ENCODE measurements at regions of chr4 and their contacts with region 1.

Region 1: GRCh38 chr4:151362404-151363164 is 37.2 kb upstream of the SH3D19 start:
- DNase-seq: peak; percentile 68 to 86 (median 80)
- H3K4me3 ChIP-seq: no peak overlapping the region
- H3K27ac ChIP-seq: peak overlapping the region in 16 of 59 donors; percentile 1 to 67 (median 26)
- H3K27me3 ChIP-seq: no peaks in the 10 kb centered on the region
- CTCF ChIP-seq: peak; percentile 91 to 100 (median 97)

Region 2: DNA sequence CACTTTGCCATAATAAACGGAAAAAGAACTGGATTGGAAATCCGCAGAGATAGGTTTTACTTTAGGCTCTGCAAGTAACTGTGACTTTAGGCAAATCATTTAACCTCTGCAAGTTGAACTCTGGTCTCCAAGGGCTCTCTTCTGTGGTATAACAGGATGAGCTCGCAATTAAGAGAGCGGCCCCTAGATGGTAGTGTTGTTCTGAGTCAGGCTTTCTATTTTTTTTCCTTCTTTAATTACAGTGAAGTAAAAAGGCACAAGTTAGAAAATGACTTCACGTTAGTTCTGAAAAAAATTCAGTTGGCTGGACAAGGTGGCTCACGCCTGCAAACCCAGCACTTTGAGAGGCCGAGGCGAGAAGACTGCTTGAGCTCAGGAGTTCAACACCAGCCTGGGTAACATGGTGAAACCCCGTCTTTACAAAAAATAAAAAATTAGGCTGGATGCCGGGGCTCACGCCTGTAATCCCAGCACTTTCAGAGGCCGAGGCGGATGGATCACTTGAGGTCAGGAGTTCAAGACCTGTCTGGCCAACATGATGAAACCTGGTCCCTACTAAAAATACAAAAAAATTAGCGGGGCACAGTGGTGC is 245.1 kb before region 1 on chr4:
- intact Hi-C with region 1: loop called (anchors 5 kb)
- DNase-seq: peak in 7 of 10 donors; percentile 31 to 69 (median 46)
- H3K4me3 ChIP-seq: no peak overlapping the region
- H3K27ac ChIP-seq: peak overlapping the region in 23 of 59 donors; percentile 4 to 73 (median 38)
- H3K27me3 ChIP-seq: no peaks in the 10 kb centered on the region
- CTCF ChIP-seq: peak; percentile 48 to 87 (median 77)

Region 3: DNA sequence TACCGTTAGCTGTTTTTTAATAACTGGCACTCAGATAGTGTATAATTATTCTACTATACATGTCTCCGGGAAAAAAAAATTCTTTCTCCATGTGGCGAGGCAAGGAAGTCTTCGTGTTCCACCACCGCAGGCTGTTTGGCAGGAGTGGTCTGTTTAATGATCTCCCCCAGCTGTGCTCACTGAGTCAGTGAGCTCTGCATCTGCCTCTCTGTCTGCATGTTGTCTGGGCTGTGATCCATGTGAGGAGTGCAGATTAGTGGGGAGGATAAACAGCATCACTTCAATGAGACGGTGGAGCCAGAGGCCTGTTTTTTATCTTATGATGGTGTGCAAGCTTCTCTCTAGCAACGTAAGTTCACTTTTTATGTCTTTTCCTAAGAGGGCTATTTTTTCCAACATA is 193.4 kb before region 1 on chr4:
- intact Hi-C with region 1: no loop called
- DNase-seq: peak in 8 of 10 donors; percentile 58 to 84 (median 70)
- H3K4me3 ChIP-seq: peak overlapping the region in 14 of 59 donors; percentile 3 to 25 (median 12)
- H3K27ac ChIP-seq: peak overlapping the region in 57 of 59 donors; percentile 18 to 81 (median 67)
- H3K27me3 ChIP-seq: no peaks in the 10 kb centered on the region
- CTCF ChIP-seq: peak in 10 of 56 donors; percentile 4 to 36 (median 19)

Region 4: DNA sequence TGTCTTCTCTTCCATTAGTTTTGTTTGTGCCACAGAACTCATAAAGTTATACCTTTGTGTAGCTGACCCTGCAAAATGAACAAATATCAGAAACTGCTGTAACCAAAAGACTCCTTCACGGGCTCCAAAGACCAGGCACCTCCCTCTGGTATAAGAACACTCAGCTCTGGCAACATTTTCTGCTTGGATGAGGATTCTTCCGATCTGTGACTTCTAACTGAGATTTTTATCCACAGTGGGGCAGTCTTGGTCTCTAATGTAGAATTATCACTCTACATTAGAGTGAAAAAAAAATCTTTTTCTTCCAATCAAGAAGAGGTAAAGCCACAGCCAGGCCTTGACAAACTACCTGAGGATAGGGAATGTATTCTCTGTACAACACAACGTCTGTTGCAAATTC is 124.1 kb before region 1 on chr4:
- intact Hi-C with region 1: loop called in 1 of 2 experiments (anchors 2 kb)
- DNase-seq: no peak
- H3K4me3 ChIP-seq: no peak overlapping the region
- H3K27ac ChIP-seq: peak overlapping the region in 44 of 59 donors; percentile 1 to 70 (median 48)
- H3K27me3 ChIP-seq: no peaks in the 10 kb centered on the region
- CTCF ChIP-seq: peak in 55 of 56 donors; percentile 14 to 71 (median 54)

Region 5: DNA sequence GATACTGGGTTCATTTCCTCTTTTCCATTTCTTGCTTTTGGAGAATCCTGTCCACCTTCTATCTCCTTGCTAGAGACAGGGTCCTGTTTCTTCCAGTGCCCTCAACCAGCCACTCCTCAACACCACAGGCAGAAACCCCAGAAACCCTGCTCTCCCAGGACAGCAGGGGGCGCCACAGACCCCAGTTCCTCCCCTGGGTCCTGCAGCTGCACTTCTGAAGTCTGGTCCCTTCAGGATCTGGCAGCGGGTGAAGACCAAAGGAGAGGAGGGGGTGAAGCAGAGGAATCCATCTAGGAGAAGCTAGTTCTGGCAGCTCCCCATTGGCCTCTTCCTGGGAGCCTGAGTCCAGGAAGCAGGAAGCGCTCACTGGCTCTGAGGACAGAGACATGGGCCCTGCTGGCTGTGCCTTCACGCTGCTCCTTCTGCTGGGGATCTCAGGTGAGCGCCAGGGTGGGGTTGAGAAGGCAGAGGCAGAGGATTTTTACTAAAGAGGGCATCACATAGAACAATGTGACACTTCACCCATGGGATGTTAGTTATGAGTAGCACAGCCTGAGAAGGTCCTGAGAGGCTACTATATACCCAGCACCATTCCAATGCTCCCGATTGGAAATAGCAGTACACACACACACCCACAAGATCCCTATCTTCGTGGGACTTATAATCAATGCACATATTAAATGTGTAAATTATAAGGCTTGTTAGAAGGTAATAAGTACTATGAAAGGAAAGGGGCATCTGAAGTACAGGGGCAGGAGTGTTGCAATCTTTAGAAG is 85.6 kb before region 1 on chr4 and contains the start of gene PRSS48:
- intact Hi-C with region 1: loop called (anchors 1 to 5 kb)
- DNase-seq: peak; percentile 26 to 89 (median 78)
- H3K4me3 ChIP-seq: peak within 1 kb of the TSS in 2 of 59 donors; percentile 17 to 30
- H3K27ac ChIP-seq: peak within 1 kb of the TSS in 14 of 59 donors; percentile 2 to 71 (median 42)
- H3K27me3 ChIP-seq: no peaks in the 10 kb centered on the region
- CTCF ChIP-seq: peak; percentile 37 to 93 (median 83)
- total RNA-seq, gene PRSS48: 1.0 TPM in 1 of 120 experiments, not detected in the others

Region 6: DNA sequence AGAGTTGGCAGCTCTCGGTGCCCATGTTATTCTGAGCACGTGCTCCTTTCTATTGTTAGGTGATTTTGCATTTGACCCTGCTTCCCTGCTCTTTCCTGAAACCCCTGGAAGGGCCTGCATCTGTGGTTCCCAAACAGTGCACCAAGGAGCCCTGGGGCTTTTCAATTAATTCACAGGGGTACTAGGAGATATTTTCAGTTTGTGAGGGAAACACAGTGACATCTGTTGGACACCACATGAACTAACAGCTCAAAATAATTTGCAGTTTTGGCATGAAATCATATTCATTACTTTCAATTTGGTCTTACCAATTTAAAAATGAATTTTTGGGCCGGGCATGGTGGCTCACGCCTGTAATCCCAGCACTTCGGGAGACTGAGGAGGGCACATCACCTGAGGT is 241.7 kb after region 1 on chr4:
- intact Hi-C with region 1: loop called in 1 of 2 experiments (anchors 10 kb)
- DNase-seq: no peak
- H3K4me3 ChIP-seq: no peak overlapping the region
- H3K27ac ChIP-seq: no peak overlapping the region
- H3K27me3 ChIP-seq: no peaks in the 10 kb centered on the region
- CTCF ChIP-seq: peak in 54 of 56 donors; percentile 12 to 59 (median 45)